Dorsolateral prefrontal cortex (tissue), 120 donors: ENCODE measurements at regions of chr17 and their contacts with region 1.

Region 1: DNA sequence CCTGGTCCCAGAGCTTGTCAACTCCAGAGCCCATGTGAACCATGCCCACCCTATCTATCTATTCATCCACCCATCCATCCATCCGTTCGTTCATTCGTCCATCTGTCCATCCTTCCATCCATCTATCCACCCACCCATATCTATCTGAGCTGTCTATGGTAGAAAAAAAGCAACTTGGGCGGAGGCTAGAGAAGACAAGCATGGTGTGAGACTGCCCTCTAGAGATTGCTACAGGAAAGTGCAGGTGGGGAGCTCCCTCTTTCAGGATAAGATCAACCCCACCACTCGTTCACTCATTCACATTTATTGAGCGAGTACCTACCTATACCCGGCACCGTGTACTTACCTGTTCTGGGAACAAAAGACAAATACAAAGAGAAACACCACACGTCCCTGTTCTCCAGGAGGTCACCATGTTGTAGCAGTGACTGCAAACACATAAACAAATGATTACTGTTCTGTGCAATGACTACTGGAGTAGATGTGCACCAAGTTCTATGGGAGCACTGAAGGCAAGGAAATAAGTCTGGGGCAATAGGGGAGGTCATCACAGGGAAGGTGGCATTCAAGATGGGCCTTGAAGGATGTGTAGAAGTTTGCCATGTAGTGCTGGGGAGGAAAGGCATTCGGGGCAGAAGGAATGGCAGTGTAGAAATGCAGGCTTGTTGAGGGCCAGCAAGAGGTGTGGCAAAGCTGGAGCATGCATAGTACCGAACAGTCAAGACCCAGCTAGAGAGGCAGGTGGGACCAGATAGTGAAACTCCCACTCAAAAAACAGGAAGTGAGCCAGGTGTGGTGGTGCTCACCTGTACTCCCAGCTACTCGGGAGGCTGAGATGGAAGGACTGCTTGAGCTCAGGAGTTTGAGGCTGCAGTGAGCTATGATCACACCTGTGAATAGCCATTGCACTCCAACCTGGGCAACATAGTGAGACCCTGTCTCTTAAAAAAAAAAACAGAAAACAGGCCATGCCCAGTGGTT is 13.4 kb upstream of the ATP5MC1 start:
- DNase-seq: peak in 5 of 10 donors; percentile 27 to 60 (median 50)
- H3K4me3 ChIP-seq: no peak overlapping the region
- H3K27ac ChIP-seq: no peak overlapping the region
- H3K27me3 ChIP-seq: no peaks in the 10 kb centered on the region
- CTCF ChIP-seq: peak; percentile 61 to 97 (median 88)

Region 2: GRCh38 chr17:48671697-48672171 is 207.5 kb before region 1 on chr17:
- intact Hi-C with region 1: loop called in 1 of 2 experiments (anchors 2 kb)
- DNase-seq: peak; percentile 71 to 87 (median 81)
- H3K4me3 ChIP-seq: peak overlapping the region in 50 of 59 donors; percentile 5 to 64 (median 34)
- H3K27ac ChIP-seq: peak overlapping the region in 1 of 59 donors; percentile 9
- H3K27me3 ChIP-seq: peaks cover 0 to 70% (median 32%) of the 10 kb centered on the region in 45 donors
- CTCF ChIP-seq: peak; percentile 63 to 97 (median 88)

Region 3: DNA sequence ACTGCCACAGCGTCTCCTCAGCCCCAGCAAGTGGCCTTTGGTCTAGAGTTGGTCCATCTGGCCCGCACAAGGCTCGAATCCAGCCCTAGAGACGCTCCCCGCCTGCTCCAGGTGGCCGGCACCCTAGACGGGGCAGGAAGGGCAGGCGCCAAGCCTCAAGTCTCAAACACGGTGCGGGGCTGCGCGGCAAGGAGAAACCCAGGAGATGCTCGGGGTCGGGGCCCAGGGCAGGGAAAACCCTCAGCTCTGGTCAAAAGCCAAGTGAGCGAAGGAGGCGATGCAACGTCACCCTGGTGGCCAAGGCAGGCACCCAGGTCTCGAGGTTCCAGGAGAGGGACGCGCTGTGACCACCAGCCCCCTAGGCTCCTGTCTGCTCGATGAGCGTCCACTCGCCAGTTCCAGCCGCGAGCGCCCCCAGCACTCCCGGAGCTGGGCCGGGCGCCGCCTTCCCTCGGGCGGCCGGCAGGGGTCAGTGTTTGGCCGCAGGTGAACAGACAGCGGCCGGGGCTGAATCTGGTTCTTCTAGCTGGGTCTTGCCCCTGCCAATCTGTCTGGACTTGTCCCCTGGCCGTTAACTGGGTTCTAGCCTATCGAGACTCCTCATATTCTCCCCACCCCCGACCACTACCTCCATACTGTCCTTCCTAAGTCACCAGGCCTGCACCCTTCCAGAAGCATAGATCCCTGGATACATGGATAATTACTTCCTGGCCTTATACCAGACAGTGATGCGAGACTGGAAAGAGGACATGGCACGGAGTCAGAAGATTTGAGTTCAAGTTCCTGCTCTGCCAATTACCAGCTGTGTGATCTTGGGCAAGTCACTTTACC is 200.9 kb before region 1 on chr17:
- intact Hi-C with region 1: loop called in 1 of 2 experiments (anchors 2 kb)
- DNase-seq: peak in 9 of 10 donors; percentile 24 to 74 (median 38)
- H3K4me3 ChIP-seq: peak overlapping the region in 32 of 59 donors; percentile 4 to 58 (median 29)
- H3K27ac ChIP-seq: no peak overlapping the region
- H3K27me3 ChIP-seq: peaks cover 0 to 83% (median 38%) of the 10 kb centered on the region in 45 donors
- CTCF ChIP-seq: peak; percentile 63 to 98 (median 90)

Region 4: DNA sequence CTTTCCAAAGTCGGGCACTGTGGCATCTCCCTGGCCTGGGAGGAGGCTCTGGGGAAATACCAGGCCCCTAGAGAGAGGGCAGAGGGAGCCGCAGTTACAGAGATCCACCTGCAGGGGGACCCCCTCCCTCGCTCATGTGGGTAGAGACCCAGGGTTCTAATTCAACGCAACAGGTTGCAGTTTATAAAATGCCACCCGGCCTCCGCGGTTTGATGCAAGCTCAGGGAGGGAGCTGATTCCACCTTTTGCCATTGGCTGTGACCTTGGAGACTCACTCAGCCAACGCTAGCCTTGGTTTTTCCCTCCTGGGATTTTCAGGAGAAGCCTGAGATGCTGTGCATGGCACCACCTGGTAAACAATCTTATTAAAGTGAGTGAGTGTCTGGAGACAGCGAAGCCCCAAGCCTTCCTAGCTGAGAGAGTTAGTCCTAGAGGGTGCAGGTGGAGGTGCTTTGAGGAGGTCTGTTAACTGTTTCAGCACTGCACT is 74.2 kb before region 1 on chr17:
- intact Hi-C with region 1: loop called (anchors 2 to 5 kb)
- DNase-seq: peak in 9 of 10 donors; percentile 28 to 78 (median 64)
- H3K4me3 ChIP-seq: peak overlapping the region in 1 of 59 donors; percentile 1
- H3K27ac ChIP-seq: no peak overlapping the region
- H3K27me3 ChIP-seq: peaks cover 0 to 6% (median 0%) of the 10 kb centered on the region in 45 donors
- CTCF ChIP-seq: peak; percentile 58 to 96 (median 90)

Region 5: DNA sequence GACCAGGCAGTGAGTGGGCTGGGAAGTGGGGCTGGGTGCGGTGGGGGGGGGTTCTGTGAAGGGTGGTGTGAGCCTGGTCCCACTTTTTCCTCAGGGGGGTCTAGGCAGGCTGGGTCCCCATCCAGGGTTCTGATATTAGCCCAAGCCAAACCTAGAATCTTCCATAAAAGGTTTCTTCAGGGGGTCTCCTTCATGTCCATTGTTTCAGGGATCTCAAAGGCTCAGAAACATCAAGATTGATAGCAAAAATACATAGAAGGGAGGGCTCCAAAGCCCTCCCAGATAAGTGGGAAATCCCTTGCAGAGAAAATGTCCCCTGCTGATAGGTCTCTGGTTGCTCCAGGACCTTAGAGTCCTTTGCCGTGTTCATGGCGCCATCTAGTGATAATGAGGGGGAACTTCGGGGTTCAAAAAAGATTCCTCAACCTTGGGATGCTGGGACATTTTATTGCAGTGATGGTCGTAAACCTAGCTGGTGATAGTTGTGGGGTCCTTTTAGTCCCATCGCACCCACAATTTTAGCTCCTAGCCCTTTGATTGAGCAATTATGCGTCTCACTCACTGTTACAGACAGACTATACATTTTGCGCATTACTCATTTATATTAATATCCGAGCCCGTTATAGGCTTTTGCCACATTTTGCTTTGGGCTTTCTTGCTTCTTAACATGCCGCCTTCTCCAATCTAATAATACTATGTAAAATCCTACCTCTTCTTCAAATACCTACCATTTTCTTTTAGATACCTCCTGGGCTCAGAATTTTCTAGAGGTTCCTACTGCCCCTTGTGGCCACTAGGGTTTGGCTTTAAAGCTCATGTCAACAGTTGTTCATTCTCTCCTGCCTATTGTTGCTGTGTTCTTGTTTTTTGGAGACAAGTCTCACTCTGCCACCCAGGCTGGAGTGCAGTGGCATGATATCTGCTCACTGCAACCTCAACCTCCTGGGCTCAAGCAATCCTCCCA is 153.0 kb after region 1 on chr17:
- intact Hi-C with region 1: loop called in 1 of 2 experiments (anchors 5 kb)
- DNase-seq: peak in 2 of 10 donors; percentile 8 to 21
- H3K4me3 ChIP-seq: no peak overlapping the region
- H3K27ac ChIP-seq: no peak overlapping the region
- H3K27me3 ChIP-seq: peaks cover 0 to 24% (median 2%) of the 10 kb centered on the region in 45 donors
- CTCF ChIP-seq: peak; percentile 33 to 80 (median 66)